ENCODE measurements at regions of chr2 and their contacts with region 1.

Region 1: DNA sequence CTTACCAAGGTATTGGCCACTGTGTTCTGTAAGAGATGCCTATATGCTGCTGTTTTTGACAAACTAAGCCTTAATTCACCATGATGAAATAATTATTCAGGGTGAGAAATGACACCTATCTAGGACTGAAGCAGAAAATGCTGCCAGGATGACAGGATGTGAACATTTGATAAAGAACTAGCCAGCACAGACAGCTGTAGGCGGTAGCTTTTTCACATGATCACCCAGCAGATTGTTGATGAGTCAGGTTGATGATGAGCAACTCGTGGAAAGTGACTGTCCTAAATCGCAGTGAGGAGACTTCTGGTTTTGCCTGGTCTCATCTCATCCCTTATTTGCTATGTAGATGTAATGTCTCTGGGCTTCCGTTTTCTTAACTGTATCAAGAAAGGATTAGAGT is 144.1 kb downstream of the PRPF40A start:
- DNase-seq: peak; percentile 5 to 24
- ATAC-seq: peak; percentile 91 to 96 (median 92)
- H3K4me3 ChIP-seq: no peak overlapping the region
- H3K4me3 Mint-ChIP-seq: no peak overlapping the region
- H3K27ac ChIP-seq: no peak overlapping the region
- H3K27ac Mint-ChIP-seq: peak overlapping the region; percentile 63 to 68
- H3K4me1 ChIP-seq: peaks cover 4% of the 10 kb centered on the region
- H3K4me1 Mint-ChIP-seq: peaks cover 5 to 22% of the 10 kb centered on the region in 2 donors
- H3K27me3 ChIP-seq: no peaks in the 10 kb centered on the region
- H3K27me3 Mint-ChIP-seq: no peaks in the 10 kb centered on the region
- CTCF ChIP-seq: no peak

Region 2: GRCh38 chr2:151707857-151708256 is 865.3 kb before region 1 on chr2:
- intact Hi-C with region 1: no loop called
- DNase-seq: no peak
- ATAC-seq: no peak
- H3K4me3 ChIP-seq: no peak overlapping the region
- H3K4me3 Mint-ChIP-seq: no peak overlapping the region
- H3K27ac ChIP-seq: no peak overlapping the region
- H3K27ac Mint-ChIP-seq: no peak overlapping the region
- H3K4me1 ChIP-seq: no peaks in the 10 kb centered on the region
- H3K4me1 Mint-ChIP-seq: peaks cover 0 to 11% of the 10 kb centered on the region in 2 donors
- H3K27me3 ChIP-seq: no peaks in the 10 kb centered on the region
- H3K27me3 Mint-ChIP-seq: peaks cover 0 to 6% of the 10 kb centered on the region in 2 donors
- CTCF ChIP-seq: no peak

Region 3: GRCh38 chr2:151771599-151772358 is 801.4 kb before region 1 on chr2:
- intact Hi-C with region 1: no loop called
- DNase-seq: no peak
- ATAC-seq: no peak
- H3K4me3 ChIP-seq: no peak overlapping the region
- H3K4me3 Mint-ChIP-seq: no peak overlapping the region
- H3K27ac ChIP-seq: peak overlapping the region; percentile 92
- H3K27ac Mint-ChIP-seq: no peak overlapping the region
- H3K4me1 ChIP-seq: peaks cover 15% of the 10 kb centered on the region
- H3K4me1 Mint-ChIP-seq: peaks cover 8 to 9% of the 10 kb centered on the region in 2 donors
- H3K27me3 ChIP-seq: no peaks in the 10 kb centered on the region
- H3K27me3 Mint-ChIP-seq: no peaks in the 10 kb centered on the region
- CTCF ChIP-seq: no peak

Region 4: DNA sequence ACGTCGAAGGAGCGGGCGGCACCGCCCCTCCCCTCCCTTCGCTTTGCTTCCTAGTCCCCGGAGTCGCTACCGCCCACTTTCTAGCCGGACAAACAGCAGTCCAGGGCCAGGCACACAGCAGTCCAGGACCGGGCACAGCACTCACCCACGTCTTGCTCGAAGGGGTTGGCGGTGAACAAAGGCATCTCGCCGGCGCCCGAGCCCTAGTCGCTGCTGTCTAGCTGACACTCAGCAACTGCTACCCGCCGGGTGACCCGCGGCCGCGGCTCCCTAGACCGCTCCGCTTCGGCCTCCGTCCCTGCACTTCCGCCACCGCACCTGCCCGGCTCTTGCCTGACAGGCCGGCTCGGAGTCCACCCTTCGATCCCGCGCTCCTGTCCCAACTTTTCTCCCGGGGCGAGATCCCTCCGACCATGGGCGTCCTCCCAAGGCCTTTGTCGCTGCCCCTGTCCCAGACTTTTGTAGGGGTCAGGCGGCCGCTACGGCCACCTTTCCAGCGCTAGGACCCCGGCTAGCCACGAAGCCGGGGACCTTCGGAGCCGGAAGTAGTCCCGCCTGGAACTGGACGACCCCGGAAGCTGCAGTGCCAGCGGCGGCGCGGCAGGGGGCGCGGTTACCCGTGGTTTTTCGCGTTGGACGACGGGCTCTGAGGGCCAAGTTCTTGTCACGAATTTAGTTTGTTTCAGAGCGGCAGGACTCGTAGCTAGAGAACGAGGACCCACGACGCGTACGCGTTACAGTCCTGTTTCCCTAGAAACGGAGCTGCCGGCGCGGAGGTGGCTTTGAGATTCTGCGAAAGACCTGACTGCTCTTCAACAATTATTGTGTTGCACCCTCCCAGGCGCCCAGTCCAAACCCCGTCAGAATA is 397.5 kb before region 1 on chr2 and contains the start of gene STAM2:
- intact Hi-C with region 1: loop called (anchors 2 kb)
- DNase-seq: peak; percentile 92 to 94
- ATAC-seq: peak; percentile 87 to 95 (median 88)
- H3K4me3 ChIP-seq: peak within 1 kb of the TSS; percentile 82
- H3K4me3 Mint-ChIP-seq: peak within 1 kb of the TSS; percentile 99
- H3K27ac ChIP-seq: peak within 1 kb of the TSS; percentile 94
- H3K27ac Mint-ChIP-seq: peak within 1 kb of the TSS; percentile 99 to 100
- H3K4me1 ChIP-seq: peaks cover 13% of the 10 kb centered on the region
- H3K4me1 Mint-ChIP-seq: peaks cover 43 to 48% of the 10 kb centered on the region in 2 donors
- H3K27me3 ChIP-seq: no peaks in the 10 kb centered on the region
- H3K27me3 Mint-ChIP-seq: peaks cover 9 to 12% of the 10 kb centered on the region in 2 donors
- CTCF ChIP-seq: peak; percentile 95
- total RNA-seq, gene STAM2: 18.7 to 23.1 (median 19.2) TPM

Region 5: DNA sequence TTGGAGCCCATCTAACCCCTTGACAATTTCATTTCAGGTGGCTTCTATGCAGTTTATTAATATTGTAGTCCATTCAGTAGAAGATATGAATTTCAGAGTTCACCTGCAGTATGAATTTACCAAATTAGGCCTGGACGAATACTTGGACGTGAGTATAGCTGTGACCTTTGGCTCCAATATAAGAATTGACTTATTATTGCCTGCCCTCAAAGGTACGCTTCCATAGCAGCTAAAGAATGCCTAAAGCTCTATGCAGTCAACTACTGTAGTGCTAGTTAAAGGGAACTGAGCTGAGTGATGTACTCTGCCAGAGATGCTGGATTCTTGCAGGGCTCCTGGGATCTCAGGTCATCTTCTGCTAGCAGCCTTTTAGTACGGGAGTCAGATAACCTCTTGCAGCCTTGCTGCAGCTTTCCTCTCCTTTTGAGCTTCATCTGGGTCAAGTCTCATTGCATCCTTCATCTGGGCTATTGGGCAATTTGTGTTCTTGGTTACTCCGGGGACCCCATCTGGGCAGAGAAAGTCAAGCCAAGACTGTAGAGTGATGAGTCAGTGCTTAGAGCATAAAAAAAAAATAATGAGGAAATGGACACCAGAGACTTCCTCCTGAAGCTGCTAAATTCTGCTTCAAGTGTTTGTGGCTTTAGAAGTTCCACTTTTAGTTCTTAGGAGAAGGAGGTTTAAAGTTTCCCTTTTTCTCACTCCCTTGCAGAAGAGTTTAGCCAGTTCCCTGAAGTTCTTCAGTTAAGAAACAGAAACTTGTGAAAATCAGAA is 38.5 kb after region 1 on chr2:
- intact Hi-C with region 1: loop called (anchors 2 kb)
- DNase-seq: peak in 1 of 2 donors; percentile 11
- ATAC-seq: peak; percentile 91 to 94 (median 93)
- H3K4me3 ChIP-seq: no peak overlapping the region
- H3K4me3 Mint-ChIP-seq: peak overlapping the region; percentile 87
- H3K27ac ChIP-seq: peak overlapping the region; percentile 62
- H3K27ac Mint-ChIP-seq: peak overlapping the region; percentile 79 to 84
- H3K4me1 ChIP-seq: peaks cover 17% of the 10 kb centered on the region
- H3K4me1 Mint-ChIP-seq: peaks cover 21 to 22% of the 10 kb centered on the region in 2 donors
- H3K27me3 ChIP-seq: no peaks in the 10 kb centered on the region
- H3K27me3 Mint-ChIP-seq: no peaks in the 10 kb centered on the region
- CTCF ChIP-seq: no peak

Measured in natural killer cell (primary cell).